Caco-2 (cell line): ENCODE measurements at regions of chr5 and their contacts with region 1.

Region 1: DNA sequence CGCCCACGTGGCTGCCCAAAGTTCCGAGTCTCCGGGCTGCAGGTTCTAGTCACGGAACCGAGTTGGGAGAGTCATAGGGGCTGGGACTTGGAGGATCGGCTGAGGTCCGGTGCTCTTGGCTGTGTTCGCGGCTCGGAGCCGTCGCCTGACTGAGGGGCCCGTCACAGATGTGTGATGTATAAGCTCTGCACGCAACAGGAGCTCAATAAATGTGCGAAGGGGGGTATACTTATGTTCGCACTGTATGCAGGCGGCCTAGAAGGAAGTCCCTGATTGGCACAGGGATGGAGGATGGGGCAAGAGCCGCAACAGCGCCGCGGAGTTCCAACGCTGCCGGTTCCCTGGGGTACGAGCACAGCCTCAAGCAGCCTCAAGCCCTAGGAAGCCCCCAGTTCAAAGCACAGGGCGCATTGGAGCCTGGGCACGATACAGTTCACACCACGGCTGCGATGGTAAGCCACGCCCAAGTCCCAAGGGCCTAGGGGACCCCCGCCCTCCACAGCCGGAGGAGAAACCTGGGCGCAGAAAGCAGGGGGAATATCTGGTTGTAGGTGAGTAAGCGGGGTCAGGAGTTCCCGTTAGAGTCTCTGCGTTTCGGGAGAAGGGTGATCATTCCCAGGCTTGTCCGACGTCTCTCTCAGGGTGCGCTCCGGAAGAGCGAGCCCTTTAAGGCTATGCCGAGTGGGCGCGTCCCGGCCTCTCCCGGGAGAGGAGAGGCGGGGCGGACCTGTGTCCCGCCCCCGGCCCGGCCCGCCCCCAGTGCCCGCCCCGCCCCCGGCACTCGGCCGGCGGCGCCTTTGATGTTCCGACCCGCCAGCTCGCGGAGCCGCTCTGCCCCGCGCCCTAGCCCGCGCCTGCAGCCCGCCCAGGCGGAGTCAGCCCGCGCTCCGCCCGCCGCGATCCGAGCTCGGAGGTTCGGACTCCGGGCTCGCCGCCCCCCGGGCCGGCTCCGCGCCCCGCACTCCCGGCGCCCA is at the start of gene TCF7:
- DNase-seq: peak; percentile 80 to 88
- H3K4me3 ChIP-seq: peak within 1 kb of the TSS; percentile 87
- H3K4me3 Mint-ChIP-seq: peak within 1 kb of the TSS; percentile 83
- H3K27ac Mint-ChIP-seq: peak within 1 kb of the TSS; percentile 67
- H3K4me1 ChIP-seq: peaks cover 12% of the 10 kb centered on the region
- H3K4me1 Mint-ChIP-seq: peaks cover 6% of the 10 kb centered on the region
- H3K27me3 ChIP-seq: no peaks in the 10 kb centered on the region
- H3K27me3 Mint-ChIP-seq: no peaks in the 10 kb centered on the region
- CTCF ChIP-seq: no peak
- total RNA-seq, gene TCF7: 36.2 and 36.5 TPM in 2 replicates

Region 2: DNA sequence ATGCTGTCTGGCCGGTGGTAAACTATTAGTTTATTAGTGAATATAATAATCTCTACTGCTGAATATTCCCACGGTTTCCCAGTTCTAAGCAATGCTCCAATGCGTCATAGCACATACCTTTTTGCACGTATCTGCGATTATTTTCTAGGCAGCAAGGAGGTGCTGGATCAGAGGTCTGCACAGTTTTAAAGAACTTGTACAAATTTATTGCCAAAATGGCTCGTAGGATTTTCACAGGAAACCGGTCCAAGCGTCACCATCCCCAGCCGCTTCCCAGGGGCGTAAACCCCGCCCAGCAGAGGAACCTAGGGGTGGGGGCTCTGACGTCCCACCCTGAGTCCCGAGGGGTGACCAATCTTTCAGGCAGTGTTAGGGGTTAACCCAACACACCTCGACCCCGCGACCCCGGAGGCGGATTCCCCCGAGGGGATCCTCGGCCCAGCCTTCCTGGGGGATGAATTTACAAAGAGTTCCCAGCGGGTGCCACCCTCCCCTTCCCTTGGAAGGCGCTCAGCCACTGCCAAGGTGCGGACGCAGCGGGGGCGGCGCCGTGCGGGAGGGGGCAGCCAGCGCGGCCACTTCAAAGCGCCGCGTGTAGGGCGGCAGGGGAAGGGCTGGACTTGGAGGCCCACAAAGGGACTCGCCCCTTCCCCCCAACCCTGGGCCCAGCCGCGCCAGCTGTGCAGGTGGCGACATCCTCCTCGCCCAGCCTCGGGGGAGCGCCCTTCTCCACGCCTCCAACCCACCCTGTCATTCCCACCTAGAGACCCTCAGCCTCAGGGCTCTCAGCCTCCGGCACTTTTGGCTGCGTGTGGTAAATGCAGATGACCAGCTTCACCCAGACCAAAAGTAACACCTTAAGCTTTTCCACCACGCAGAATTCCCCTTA is 43.2 kb before region 1 on chr5:
- CTCF ChIA-PET with region 1: no interaction called
- POLR2A ChIA-PET with region 1: no interaction called
- intact Hi-C with region 1: loop called (anchors 2 kb)
- DNase-seq: peak; percentile 63 to 70
- H3K4me3 ChIP-seq: peak overlapping the region; percentile 46
- H3K4me3 Mint-ChIP-seq: peak overlapping the region; percentile 65
- H3K27ac Mint-ChIP-seq: no peak overlapping the region
- H3K4me1 ChIP-seq: peaks cover 8% of the 10 kb centered on the region; the same call in 1 of the 2 replicates
- H3K4me1 Mint-ChIP-seq: no peaks in the 10 kb centered on the region
- H3K27me3 ChIP-seq: no peaks in the 10 kb centered on the region
- H3K27me3 Mint-ChIP-seq: no peaks in the 10 kb centered on the region
- CTCF ChIP-seq: peak in 1 of 2 experiments; percentile 23

Region 3: GRCh38 chr5:134145779-134146581 is 31.8 kb after region 1 on chr5:
- CTCF ChIA-PET with region 1: no interaction called
- POLR2A ChIA-PET with region 1: no interaction called
- intact Hi-C with region 1: no loop called
- DNase-seq: peak; percentile 79 to 88
- H3K4me3 ChIP-seq: no peak overlapping the region
- H3K4me3 Mint-ChIP-seq: no peak overlapping the region
- H3K27ac Mint-ChIP-seq: no peak overlapping the region
- H3K4me1 ChIP-seq: peaks cover 25% of the 10 kb centered on the region
- H3K4me1 Mint-ChIP-seq: peaks cover 19% of the 10 kb centered on the region
- H3K27me3 ChIP-seq: no peaks in the 10 kb centered on the region
- H3K27me3 Mint-ChIP-seq: no peaks in the 10 kb centered on the region
- CTCF ChIP-seq: peak; percentile 96 to 97

Region 4: DNA sequence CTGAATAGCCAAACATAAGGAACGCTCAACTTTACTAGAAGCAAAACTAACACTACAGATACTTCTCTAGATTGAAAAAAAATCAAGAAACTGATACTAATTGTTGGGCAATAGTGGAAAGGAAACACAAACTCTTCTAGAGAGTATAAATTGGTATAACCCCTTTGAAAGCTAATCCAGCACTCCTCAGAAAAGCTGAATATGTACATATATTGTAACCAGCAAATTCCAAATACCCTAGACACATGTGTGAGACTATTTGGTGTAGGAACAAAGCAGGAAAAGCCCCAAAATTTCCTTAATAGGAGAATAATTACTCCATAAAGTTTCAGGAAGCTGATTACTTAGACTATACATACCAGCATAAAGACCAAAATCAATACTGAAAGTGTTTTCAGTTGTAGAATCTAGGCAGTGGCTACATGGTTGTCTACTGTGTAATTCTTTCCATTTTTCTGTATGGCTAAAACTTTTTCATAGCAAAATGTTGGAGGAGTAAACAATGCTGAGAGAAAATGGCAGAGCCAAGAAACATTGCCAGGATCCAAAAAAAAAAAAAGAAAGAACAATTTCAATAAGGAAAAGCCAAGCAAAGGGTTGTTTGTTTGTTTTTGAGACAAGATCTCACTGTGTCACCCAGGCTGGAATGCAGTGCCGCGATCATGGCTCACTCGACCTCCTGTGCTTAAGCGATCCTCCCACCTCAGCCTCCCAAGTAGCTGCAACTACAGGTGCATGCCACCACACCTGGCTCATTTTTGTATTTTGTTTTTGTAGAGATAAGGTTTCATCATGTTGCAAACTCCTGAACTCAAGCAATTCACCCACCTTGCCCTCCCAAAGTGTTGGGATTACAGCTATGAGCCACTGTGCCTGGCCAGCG is 47.6 kb after region 1 on chr5:
- CTCF ChIA-PET with region 1: no interaction called
- POLR2A ChIA-PET with region 1: no interaction called
- intact Hi-C with region 1: no loop called
- DNase-seq: no peak
- H3K4me3 ChIP-seq: no peak overlapping the region
- H3K4me3 Mint-ChIP-seq: no peak overlapping the region
- H3K27ac Mint-ChIP-seq: no peak overlapping the region
- H3K4me1 ChIP-seq: no peaks in the 10 kb centered on the region
- H3K4me1 Mint-ChIP-seq: peaks cover 12% of the 10 kb centered on the region
- H3K27me3 ChIP-seq: no peaks in the 10 kb centered on the region
- H3K27me3 Mint-ChIP-seq: no peaks in the 10 kb centered on the region
- CTCF ChIP-seq: no peak